Activated T-helper 2 cell treated with anti-CD3 and anti-CD28 coated beads, Interferon-gamma antibody, Interleukin-2, Interleukin-4, amounts not matched to agents 10 μg/mL and 5 μg/mL and 100 μg/mL, durations not matched to agents 14 hours and 24 hours and 36 hours (primary cell): ENCODE measurements at regions of chr5 and their contacts with region 1.

Region 1: DNA sequence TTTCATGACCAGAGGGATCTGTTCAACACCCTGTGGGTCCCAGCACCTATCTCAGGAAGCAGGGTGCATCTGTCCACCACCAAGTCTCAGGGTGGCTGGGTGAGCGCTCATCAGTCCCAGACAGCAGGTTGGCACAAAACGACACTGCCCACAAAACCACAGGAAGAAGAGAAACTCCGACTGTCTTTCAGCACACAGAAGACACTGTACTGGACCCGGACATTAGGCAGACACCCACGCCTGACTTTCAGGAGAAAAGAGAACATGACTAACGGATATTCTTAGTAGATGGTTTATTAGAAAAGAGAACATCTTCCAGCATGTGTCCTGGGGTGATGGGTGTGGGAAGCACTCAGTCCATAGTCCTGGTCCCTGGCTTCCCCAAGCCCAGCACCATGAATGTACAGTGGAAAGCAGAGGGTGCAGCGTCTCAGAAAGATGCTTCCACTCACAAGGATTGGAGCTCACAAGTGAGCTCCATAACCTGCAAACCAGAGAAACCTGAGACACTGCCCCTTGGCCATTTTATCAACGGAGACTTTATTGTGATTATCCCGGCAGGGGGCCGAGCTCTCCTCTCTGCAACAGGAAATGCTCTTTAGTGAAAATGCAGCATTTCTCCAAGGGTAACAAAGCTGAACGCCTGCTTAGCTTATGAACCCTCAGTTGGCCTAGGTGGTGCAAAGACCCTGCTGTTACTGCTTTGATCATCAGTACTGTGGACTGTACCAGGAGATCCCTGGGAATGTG is 35.8 kb upstream of the LCP2 start:
- DNase-seq: peak; percentile 53
- H3K4me3 Mint-ChIP-seq: peak overlapping the region; percentile 81
- H3K27ac Mint-ChIP-seq: no peak overlapping the region
- H3K4me1 Mint-ChIP-seq: peaks cover 62% of the 10 kb centered on the region
- H3K27me3 Mint-ChIP-seq: no peaks in the 10 kb centered on the region

Region 2: DNA sequence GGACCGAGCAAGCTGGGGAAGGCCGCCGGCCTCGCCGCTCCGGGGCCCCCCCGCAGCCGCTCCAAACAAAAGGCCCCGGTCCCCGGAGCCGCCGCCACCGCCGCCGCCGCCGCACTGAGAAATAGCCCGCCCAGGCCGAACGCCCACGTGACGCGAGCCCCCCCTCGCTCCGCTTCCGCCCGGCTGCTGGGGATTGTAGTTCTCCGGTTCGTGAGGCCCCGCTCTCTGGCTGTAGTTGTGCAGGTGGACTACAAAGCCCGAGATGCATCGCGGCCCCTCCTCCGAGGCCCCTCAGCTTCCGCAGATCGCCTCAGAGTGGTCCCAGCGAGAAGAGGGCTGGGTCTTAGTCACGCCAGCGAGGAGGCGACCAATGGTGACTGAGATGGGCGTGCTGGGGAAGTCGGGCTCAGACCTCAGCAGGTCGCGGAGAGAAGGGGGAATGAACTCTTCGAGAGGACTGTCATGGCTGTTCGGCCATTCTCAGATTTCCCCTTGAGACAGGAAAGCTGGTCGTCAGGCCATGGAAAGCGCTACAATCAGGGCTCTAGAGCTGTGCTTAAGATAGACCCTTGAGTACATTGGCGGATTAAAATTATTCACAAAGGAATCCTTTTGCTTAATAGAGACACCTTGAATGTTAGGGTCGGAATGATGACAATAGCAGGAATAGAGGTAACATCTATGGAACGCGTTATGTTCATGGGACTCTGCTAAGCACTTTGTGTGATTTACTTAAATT is 1753.7 kb before region 1 on chr5:
- intact Hi-C with region 1: loop called (anchors 2 kb)
- DNase-seq: peak; percentile 97
- H3K4me3 Mint-ChIP-seq: peak overlapping the region; percentile 77
- H3K27ac Mint-ChIP-seq: peak overlapping the region; percentile 94
- H3K4me1 Mint-ChIP-seq: peaks cover 32% of the 10 kb centered on the region
- H3K27me3 Mint-ChIP-seq: no peaks in the 10 kb centered on the region

Region 3: DNA sequence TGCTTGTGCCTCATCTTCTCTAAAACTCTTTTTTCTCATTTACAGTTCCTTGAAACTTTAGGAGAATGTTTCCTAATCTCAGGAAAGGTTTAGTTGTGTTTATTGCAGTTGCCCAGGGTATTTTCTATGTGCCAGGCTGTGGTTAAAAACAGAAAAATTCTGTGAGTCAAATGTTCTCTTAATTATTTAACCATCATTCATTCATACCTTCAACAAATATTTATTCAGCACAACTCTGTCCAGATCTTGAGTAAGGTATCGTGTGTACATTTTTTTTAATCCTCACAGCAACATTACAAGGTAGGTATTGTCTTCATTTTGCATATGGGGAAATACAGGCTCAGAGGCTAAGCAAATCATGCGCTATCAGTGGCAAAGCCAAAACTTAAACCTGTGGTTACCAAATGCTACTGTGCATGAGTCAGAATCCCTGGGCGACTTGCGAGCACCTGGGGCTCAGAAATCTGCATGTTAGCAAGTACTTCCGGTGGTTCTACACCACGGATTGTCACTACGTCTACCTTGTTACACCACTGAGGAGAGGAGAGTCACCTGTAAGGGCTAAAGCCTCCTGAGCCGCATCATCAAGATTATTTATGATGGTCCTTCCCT is 79.4 kb before region 1 on chr5:
- intact Hi-C with region 1: loop called (anchors 1 kb)
- DNase-seq: peak; percentile 58
- H3K4me3 Mint-ChIP-seq: no peak overlapping the region
- H3K27ac Mint-ChIP-seq: peak overlapping the region; percentile 69
- H3K4me1 Mint-ChIP-seq: peaks cover 37% of the 10 kb centered on the region
- H3K27me3 Mint-ChIP-seq: no peaks in the 10 kb centered on the region

Region 4: DNA sequence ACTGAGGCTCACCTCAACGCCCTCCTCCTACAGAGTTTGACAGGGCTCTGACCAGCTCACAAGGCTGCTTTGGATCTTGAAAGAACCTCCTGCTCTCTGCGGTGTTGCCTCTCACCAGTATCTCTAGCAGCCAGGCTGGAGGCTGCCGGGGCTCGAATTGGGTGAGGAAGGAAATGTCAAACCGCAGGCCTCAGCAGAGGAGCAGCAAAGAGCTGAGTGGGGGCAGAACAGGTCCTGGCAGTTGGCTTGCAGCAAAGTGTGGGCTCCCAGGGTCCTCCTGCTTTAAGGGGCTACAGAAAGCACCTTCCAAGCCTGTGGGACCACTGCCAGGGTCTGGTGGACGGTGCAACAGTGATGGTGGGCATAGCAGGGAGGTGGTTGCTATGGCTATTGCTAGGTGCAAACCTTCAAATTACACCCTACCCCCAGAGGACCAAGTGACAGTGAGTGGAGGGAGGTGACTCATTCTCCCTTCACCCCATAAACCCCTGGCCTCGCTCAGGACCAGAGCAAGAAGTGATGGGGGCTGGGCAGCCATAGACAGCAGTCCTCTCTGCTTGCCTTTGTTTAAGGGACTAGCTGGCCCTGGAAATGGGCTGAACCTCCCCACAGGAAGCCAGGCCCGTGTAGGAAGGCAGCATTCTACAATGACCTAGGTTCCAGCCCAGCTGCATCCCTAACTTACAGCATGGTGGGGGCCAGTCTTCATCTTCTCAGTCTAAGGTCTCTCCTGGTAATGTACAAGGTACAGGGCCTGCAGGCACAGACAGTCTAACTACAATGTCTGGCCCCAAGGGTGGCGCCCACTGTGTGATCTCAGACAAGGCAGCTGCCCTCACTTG is 54.5 kb before region 1 on chr5:
- intact Hi-C with region 1: loop called (anchors 1 kb)
- DNase-seq: peak; percentile 90
- H3K4me3 Mint-ChIP-seq: peak overlapping the region; percentile 63
- H3K27ac Mint-ChIP-seq: peak overlapping the region; percentile 98
- H3K4me1 Mint-ChIP-seq: peaks cover 86% of the 10 kb centered on the region
- H3K27me3 Mint-ChIP-seq: no peaks in the 10 kb centered on the region

Region 5: DNA sequence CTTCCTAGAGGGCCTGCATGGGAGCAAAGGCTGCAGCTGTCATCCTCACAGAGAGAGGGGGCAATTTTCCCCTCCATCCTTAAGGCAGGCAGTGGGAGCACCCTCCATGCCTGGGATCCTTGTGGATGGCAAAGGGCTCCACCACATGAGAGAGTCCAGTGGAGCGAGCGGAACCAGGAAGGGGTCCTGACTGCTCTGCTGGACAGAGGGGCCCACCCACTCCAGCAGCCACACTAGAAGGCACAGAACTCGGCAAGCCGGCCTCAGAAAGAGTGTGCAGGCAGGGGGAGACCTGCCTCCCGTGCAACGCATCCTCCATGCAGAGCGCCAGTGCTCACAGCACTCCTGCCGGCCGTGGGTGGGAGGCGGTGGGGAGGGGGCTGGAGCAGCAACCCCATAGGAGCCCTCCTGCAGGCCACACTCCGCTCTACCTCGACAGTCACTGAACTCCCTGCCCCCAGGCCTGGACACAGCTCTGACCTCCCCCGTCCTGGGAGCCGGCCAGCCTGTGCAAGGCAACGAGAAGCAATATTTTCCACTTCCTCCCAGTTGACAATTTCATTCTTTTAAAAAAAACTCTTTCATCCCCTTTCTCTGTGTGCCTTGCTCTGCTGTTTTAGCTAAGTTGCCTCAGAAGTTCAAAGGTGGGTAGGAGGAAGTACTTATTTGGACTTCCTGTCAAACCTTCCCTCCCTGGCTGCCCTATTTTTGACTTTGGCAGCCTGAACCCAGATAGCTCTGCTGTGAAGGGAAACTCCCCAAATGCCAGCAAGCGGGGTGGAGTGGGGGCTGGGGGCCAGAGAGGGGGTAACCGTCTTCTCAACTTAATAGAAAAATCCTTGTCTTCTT is 30.5 kb before region 1 on chr5:
- intact Hi-C with region 1: loop called (anchors 1 kb)
- DNase-seq: peak; percentile 60
- H3K4me3 Mint-ChIP-seq: peak overlapping the region; percentile 45
- H3K27ac Mint-ChIP-seq: peak overlapping the region; percentile 87
- H3K4me1 Mint-ChIP-seq: peaks cover 70% of the 10 kb centered on the region
- H3K27me3 Mint-ChIP-seq: no peaks in the 10 kb centered on the region

Region 6: GRCh38 chr5:170368586-170368985 is 35.2 kb after region 1 on chr5:
- intact Hi-C with region 1: no loop called
- DNase-seq: no peak
- H3K4me3 Mint-ChIP-seq: no peak overlapping the region
- H3K27ac Mint-ChIP-seq: no peak overlapping the region
- H3K4me1 Mint-ChIP-seq: no peaks in the 10 kb centered on the region
- H3K27me3 Mint-ChIP-seq: peaks cover 21% of the 10 kb centered on the region